ENCODE measurements at regions of chr4 and their contacts with region 1.

Region 1: DNA sequence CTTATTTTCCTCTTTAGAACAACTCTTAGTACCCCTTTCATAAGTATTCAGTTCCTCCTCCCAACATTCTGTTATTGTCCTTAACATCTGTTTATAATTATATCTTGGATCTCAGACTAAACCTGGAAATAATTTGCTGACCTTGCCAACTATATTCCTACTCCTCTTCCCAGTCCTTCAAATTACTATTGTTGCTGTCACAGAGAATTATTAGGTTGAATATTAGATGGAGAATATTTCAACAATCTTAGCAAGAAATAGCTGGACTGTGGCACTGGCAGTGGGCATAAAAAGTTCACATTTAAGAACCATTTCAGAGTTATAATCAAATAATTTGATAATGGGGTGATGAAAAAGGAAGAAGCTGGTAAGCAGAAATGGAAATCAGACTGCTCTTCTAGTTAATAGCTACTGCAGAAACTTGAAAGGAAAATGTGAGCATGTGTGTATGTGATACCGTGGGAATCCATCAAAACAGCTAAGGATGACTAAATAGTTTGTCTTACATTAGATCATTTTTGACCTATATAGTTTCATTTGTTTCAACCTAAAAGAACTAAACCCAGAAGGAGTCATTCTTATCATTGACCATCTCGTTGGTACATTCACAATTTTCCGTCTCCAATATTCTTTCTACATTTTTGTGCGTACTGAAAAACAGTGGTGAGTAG is 43.3 kb upstream of the PRDM8 start:
- DNase-seq: no peak
- H3K4me3 Mint-ChIP-seq: no peak overlapping the region
- H3K27ac Mint-ChIP-seq: peak overlapping the region; percentile 9
- H3K4me1 Mint-ChIP-seq: peaks cover 10% of the 10 kb centered on the region
- H3K27me3 Mint-ChIP-seq: peaks cover 2% of the 10 kb centered on the region

Region 2: DNA sequence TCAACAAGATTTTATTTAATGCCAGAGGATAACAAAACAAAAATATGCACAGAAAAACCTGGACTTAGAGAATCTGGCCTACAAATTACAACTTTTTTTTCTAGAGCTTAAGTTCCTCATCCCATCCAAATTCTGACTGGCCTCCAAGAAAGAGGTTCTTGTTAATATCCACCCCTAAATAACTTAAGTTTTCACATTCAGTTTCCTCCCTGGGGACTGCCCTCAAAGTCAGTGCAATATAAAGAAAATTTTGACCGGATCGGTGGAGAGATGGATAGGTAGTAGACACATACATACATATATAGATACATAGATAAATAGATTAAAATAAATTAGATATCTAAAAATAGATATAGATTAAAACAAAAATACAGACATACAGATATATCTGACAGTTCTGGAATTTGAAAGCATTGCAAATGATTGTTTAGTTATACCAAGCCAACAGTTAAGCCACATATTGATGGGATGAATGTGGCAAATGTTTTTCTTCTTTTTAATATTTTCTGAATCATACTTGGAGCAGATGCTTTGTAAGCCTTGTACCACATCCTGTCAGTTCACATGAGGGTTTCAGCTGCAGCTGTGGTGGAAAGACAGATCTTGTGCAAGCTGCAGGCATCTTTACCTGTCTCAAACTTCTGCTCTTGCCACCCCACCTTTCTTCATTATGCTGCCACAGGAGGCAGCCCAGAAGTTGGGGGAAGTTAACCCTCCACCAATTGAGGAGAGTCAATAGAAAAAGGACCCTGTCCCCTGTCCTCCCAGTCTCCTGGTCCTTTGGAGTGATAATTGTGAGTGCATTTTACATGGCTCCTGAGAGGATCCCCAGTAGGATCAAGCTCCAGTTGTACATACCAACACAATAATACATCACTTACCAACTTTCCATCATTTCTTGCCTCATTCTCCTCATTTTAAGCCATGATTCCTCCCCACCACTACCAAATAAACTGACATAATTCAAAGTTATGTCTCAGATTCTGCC is 15.2 kb before region 1 on chr4:
- CTCF ChIA-PET with region 1: interaction called, 15 read pairs
- POLR2A ChIA-PET with region 1: interaction called, 3 read pairs
- DNase-seq: peak; percentile 79
- H3K4me3 Mint-ChIP-seq: peak overlapping the region; percentile 18
- H3K27ac Mint-ChIP-seq: peak overlapping the region; percentile 88
- H3K4me1 Mint-ChIP-seq: peaks cover 63% of the 10 kb centered on the region
- H3K27me3 Mint-ChIP-seq: no peaks in the 10 kb centered on the region

Region 3: DNA sequence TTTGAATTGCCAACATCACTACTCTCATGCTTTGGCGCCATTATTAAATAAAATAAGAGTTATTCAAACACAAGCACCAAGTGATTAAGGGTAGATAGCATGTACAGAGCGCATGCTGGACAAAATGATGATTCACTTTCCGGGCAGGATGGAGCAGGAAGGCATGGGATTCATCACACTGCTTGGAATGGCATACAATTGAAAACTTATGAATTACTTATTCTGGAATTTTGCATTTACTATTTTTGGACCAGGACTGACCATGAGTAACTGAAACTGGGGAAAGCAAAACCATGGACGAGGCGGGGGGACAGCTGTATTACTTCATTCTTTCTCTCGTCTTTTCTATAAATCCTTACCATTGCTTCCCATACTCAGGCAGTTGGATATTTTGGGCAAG is 84.0 kb after region 1 on chr4:
- CTCF ChIA-PET with region 1: no interaction called
- POLR2A ChIA-PET with region 1: no interaction called
- DNase-seq: no peak
- H3K4me3 Mint-ChIP-seq: no peak overlapping the region
- H3K27ac Mint-ChIP-seq: no peak overlapping the region
- H3K4me1 Mint-ChIP-seq: no peaks in the 10 kb centered on the region
- H3K27me3 Mint-ChIP-seq: peaks cover 15% of the 10 kb centered on the region